ENCODE measurements at regions of chr12 and their contacts with region 1.

Region 1: DNA sequence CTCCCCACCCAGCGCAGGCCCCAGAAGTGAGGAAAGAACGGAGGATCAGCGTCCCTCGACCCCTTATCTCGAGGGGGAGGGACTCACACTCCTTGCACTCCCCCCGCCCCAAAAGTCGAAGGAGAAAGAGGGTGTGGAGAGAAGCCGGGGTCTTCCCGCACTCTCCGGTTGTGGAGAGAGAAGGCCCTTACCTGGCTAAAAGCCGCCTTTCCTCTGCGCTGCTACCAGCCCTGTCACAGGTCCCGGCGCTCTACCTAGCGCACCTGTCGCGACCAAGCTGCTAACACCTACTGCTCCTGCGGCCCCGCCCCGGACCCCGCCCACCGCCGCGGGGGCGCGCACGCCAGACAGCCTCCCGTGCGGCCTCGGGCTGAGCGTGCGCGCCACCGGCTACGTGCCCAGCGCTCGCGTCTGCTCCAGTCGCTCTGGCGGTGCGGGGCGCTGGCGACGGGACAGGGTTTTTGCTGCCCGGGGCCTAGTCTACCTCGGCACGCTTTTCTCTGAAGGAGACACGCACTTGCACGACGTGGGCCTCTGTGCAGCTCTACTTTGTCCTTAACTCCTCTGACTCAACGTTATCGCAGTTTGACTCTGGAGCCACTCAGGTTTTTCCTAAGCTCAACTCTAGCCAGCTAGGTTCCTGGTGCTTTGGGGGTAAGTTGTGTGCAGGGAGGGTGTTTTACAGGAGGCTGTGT is at the start of gene LIMA1:
- DNase-seq: peak; percentile 85
- H3K4me3 Mint-ChIP-seq: peak within 1 kb of the TSS; percentile 89
- H3K27ac Mint-ChIP-seq: peak within 1 kb of the TSS; percentile 74
- H3K4me1 Mint-ChIP-seq: peaks cover 17% of the 10 kb centered on the region
- H3K27me3 Mint-ChIP-seq: peaks cover 20% of the 10 kb centered on the region
- total RNA-seq, gene LIMA1: 64.0 and 68.4 TPM in 2 replicates

Region 2: DNA sequence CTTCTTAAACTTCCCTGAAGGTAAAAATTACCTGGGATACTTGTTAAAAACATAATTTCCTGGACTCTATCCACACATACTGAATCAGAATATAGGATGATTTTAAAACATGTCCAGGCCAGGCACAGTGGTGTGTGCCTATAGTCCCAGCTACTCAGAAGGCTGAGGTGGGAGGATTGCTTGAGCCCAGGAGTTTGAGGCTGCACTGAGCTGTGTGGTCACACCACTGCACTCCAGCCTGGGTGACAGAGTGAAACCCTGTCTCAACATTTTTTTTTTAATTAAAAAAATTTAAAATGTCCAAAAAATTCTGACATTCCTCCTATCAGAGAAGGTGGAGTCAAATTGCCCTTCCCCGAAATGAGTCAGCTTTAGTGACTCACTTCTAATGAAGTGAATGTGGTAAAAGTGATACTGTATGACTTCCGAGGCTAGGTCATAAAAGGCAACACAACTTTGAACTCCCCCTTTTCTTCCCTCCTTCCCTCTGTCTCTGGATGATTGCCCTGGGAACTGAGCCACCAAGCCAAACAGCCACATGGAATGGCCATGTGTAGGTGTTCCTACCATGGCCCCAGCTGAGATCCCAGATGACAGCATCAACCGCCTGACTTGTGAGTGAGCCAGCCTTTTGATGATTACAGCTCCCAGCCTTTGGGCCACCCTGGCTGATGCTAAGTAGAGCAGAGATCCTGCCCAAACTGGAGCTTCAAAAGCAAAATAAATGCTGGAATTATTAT is 36.3 kb before region 1 on chr12:
- intact Hi-C with region 1: loop called (anchors 1 kb)
- DNase-seq: peak; percentile 2
- H3K4me3 Mint-ChIP-seq: peak overlapping the region; percentile 79
- H3K27ac Mint-ChIP-seq: peak overlapping the region; percentile 90
- H3K4me1 Mint-ChIP-seq: peaks cover 38% of the 10 kb centered on the region
- H3K27me3 Mint-ChIP-seq: peaks cover 1% of the 10 kb centered on the region